ENCODE measurements at regions of chr12 and their contacts with region 1.

Region 1: GRCh38 chr12:47837190-47838171 is 17.8 kb upstream of the HDAC7 start:
- DNase-seq: peak; percentile 90
- H3K4me3 ChIP-seq: no peak overlapping the region
- H3K27ac ChIP-seq: peak overlapping the region in 2 of 4 donors; percentile 43 to 49
- H3K4me1 ChIP-seq: peaks cover 0 to 28% (median 19%) of the 10 kb centered on the region in 4 donors
- H3K27me3 ChIP-seq: no peaks in the 10 kb centered on the region
- CTCF ChIP-seq: peak; percentile 86 to 95 (median 89)
- EP300 ChIP-seq: no peak
- POLR2A ChIP-seq: no peak

Region 2: DNA sequence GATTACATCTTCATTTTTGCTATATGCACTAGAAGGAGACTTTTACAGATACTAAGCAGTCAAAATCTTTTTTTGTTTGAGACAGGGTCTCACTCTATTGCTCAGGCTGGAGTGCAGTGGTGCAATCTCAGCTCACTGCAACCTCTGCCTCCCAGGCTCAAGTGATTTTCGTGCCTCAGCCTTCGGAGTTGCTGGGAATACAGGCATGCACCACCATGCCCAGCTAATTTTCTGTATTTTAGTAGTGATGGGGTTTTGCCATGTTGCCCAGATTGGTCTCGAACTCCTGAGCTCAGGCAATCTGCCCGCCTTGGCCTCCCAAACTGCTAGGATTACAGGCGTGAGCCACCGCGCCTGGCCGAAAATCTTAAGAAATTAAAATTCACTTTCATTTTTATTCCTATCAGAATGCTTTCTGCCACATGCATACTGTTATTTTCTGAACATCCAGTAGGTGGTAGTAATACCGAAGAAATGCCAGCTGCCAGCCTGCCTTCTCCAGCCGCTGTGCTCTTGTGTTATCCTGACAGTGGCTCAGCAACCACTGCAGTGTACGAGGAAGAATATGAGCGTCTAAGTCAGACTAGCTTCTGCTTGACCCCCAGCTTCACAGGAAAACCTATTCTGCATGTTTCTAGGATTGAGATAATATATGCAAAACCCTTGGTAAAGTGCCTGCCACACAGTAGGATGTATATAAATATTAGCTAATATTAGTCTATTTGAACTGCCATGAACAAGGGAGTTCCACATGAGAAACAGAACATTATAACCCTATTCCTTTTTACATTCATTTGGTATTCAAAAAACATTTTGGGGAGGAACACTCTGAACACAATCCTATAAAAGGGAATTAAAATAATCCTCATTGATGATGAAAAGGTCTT is 185.9 kb before region 1 on chr12:
- intact Hi-C with region 1: loop called (anchors 5 kb)
- DNase-seq: peak; percentile 84
- H3K4me3 ChIP-seq: no peak overlapping the region
- H3K27ac ChIP-seq: peak overlapping the region in 3 of 4 donors; percentile 55 to 72 (median 71)
- H3K4me1 ChIP-seq: peaks cover 0 to 44% (median 31%) of the 10 kb centered on the region in 4 donors
- H3K27me3 ChIP-seq: no peaks in the 10 kb centered on the region
- CTCF ChIP-seq: peak; percentile 57 to 81 (median 71)
- EP300 ChIP-seq: no peak
- POLR2A ChIP-seq: no peak

Region 3: DNA sequence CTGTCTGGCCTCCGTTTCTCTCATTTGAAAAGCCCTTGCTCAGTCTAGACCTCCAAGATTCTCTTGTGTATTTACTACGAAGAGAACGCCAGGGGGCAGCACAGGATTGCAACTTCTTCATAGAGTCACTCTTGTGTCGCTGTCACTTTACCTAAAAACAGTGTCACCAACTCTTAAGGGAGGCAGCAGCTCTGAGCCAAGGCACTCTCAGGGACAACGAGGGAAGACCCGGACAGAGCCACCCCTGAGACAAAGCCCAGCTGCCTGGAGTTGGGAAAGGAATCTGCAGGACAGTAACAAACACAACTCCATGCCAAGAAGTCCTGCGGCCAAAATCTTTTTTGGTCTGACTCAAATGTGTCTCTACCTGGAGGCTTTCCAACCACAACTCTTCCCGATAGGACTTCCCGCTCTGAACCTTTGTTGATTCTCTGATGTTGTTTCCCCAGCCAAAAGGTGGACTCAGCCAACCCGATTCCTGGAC is 122.0 kb before region 1 on chr12:
- intact Hi-C with region 1: loop called (anchors 1 kb)
- DNase-seq: peak; percentile 94
- H3K4me3 ChIP-seq: peak overlapping the region in 1 of 4 donors; percentile 13
- H3K27ac ChIP-seq: peak overlapping the region; percentile 79 to 88 (median 85)
- H3K4me1 ChIP-seq: peaks cover 0 to 46% (median 38%) of the 10 kb centered on the region in 4 donors
- H3K27me3 ChIP-seq: no peaks in the 10 kb centered on the region
- CTCF ChIP-seq: peak; percentile 63 to 85 (median 74)
- EP300 ChIP-seq: no peak
- POLR2A ChIP-seq: no peak

Region 4: DNA sequence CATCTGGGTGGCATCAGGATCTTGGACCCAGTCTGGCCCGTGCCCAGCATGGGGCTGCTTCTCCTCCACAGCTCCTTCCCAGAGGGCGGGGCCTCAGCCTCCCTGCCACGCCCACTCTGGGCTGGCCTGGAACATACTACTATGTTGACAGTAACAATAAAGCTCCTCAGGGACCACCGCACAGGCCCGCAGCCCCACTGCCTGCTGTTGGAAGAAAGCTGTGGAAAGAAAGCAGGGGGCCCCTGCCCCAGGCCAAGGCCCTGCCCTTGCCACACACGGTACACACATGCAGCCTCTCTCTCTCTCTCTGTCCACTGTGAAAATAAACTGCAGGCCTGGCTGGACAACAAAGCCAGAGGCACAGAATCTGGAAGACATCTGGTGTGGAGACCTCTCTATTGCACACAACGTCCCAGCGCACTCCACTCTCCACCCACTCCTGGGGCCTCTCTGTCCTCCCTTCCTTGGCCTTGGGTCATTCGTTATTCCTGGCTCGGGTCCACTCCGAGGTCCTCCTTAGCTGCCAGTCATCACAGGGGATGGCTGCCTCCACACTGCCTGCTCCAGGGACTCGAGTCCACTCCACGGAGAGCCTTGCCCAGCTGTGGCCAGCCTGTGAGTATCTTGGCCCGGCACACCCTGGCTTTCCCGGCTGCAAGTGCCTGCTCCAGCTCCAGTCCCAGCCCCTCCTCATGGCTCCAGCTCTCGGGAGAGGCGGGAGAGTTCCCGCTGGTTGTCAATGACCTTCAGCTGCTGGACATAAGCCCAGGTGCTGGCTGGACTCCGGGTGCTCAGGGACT is 100.4 kb before region 1 on chr12:
- intact Hi-C with region 1: loop called (anchors 2 kb)
- DNase-seq: peak; percentile 96
- H3K4me3 ChIP-seq: peak overlapping the region in 2 of 4 donors; percentile 2
- H3K27ac ChIP-seq: peak overlapping the region; percentile 78 to 83 (median 82)
- H3K4me1 ChIP-seq: peaks cover 0 to 53% (median 44%) of the 10 kb centered on the region in 4 donors
- H3K27me3 ChIP-seq: no peaks in the 10 kb centered on the region
- CTCF ChIP-seq: peak in 1 of 4 experiments; percentile 12
- EP300 ChIP-seq: peak in 1 of 4 donors; percentile 14
- POLR2A ChIP-seq: no peak

Region 5: DNA sequence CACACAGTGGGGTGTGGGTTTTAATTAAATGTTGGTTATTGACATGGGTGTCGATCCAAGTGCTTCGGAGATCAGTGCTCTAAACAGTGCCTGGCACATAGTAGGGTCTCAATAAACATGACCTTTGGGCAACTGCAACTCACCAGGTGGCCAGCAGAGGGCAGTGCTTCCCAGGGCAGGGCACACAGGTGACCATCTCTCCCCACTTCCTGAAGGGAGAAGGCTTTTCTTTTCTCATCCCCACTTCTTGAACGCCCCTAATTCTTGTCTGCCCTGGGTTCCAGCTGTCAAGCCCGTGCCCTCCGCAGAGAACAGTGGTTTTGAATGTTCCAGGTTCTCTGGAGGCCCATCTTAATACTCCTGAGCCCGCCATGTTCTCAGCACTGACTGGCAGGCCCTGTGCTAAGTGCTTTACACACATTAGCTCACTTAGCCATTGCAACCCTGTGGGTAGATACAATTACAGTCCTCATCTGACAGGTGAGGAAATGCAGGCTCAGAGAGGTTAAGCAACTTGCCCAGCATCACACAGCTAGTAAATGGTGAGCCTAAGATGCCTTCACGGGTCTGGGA is 95.1 kb before region 1 on chr12:
- intact Hi-C with region 1: loop called (anchors 2 kb)
- DNase-seq: no peak
- H3K4me3 ChIP-seq: no peak overlapping the region
- H3K27ac ChIP-seq: no peak overlapping the region
- H3K4me1 ChIP-seq: peaks cover 0 to 23% (median 15%) of the 10 kb centered on the region in 4 donors
- H3K27me3 ChIP-seq: no peaks in the 10 kb centered on the region
- CTCF ChIP-seq: peak; percentile 91 to 98 (median 96)
- EP300 ChIP-seq: no peak
- POLR2A ChIP-seq: no peak

Region 6: DNA sequence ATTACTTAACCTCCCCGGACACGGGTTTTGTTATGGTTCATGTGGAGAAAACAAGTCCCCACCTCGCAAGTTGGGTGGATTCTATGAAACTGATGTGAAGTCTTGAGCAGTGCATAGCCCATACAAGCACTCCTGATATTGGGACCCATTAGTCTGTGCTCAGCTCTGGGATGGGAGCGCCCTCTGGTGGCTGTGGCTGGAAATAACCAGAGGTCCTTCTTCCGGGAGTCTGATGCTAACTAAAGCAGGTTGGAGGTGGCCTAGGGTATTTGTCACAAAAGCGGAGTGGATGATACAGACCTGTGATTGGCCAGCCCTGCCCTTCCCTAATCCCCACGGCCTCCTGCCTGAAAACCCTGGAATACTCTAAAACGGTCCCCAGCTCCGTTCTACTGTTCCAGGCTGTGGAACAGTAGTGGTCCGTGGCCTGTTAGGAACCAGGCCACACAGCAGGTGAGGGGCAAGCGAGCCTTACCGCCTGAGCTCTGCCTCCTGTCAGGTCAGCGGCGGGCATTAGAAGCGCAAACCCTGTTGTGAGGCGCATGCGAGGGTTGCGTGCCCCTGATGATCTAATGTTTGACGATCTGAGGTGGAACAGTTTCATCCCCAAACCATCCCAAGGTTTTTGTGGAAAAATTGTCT is 58.1 kb before region 1 on chr12:
- intact Hi-C with region 1: loop called (anchors 1 kb)
- DNase-seq: peak; percentile 94
- H3K4me3 ChIP-seq: no peak overlapping the region
- H3K27ac ChIP-seq: peak overlapping the region in 3 of 4 donors; percentile 15 to 63 (median 57)
- H3K4me1 ChIP-seq: peaks cover 0 to 60% (median 48%) of the 10 kb centered on the region in 4 donors
- H3K27me3 ChIP-seq: no peaks in the 10 kb centered on the region
- CTCF ChIP-seq: peak; percentile 91 to 96 (median 93)
- EP300 ChIP-seq: no peak
- POLR2A ChIP-seq: no peak

Region 7: GRCh38 chr12:47799357-47799955 is 38.0 kb before region 1 on chr12:
- intact Hi-C with region 1: loop called (anchors 2 kb)
- DNase-seq: peak; percentile 88
- H3K4me3 ChIP-seq: no peak overlapping the region
- H3K27ac ChIP-seq: peak overlapping the region; percentile 69 to 99 (median 98)
- H3K4me1 ChIP-seq: peaks cover 0 to 67% (median 66%) of the 10 kb centered on the region in 4 donors
- H3K27me3 ChIP-seq: no peaks in the 10 kb centered on the region
- CTCF ChIP-seq: no peak
- EP300 ChIP-seq: no peak
- POLR2A ChIP-seq: no peak

Region 8: DNA sequence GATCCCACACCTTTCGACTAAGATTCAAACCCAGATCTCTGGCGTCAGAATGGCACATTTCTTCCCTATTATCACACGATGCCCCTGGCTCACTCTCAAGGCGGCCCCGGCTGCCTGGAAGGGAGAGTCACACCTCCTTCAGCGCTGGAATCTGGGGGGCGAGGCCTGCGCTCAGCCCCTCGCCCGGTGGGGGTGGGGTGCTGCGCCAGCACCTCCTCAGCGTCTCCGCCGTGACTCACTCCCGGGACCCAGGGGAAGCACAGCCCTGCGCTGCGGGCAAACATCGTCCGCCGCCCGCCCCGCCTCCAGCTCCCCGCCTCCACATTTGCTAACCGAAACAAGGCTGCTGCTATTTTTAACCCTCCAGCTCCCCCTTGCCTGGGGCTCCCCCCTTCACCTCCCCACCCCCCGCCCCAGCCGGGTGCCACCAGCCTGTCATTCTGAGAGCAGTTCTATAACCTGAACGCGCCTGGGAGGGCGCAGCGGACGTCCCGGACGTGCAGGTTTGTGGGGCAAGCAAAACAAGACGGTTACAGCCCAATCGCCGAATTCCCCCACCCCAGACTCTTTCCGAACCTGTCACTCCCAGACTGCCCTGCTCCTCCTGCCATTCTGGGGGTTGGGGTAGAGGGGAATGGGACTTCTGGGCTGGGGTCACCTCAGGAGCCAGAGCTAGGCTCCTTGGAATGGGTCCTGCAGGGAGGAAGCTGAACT is 24.5 kb before region 1 on chr12:
- intact Hi-C with region 1: no loop called
- DNase-seq: peak; percentile 96
- H3K4me3 ChIP-seq: peak overlapping the region; percentile 31 to 48 (median 42)
- H3K27ac ChIP-seq: peak overlapping the region; percentile 98 to 99 (median 99)
- H3K4me1 ChIP-seq: peaks cover 0 to 100% (median 98%) of the 10 kb centered on the region in 4 donors
- H3K27me3 ChIP-seq: no peaks in the 10 kb centered on the region
- CTCF ChIP-seq: peak in 1 of 4 experiments; percentile 9
- EP300 ChIP-seq: peak in 1 of 4 donors; percentile 31
- POLR2A ChIP-seq: peak in 1 of 2 donors; percentile 43

Measured in sigmoid colon (tissue), 7 donors.